K562 (cell line): ENCODE measurements at regions of chr5 and their contacts with region 1.

Region 1: GRCh38 chr5:66987949-66988838 is 208.4 kb downstream of the CD180 start:
- DNase-seq: peak; percentile 30 to 55 (median 42)
- ATAC-seq: peak; percentile 82
- H3K4me3 ChIP-seq: no peak overlapping the region
- H3K27ac ChIP-seq: no peak overlapping the region
- H3K4me1 ChIP-seq: no peaks in the 10 kb centered on the region
- H3K27me3 ChIP-seq: peaks cover 0 to 9% of the 10 kb centered on the region in 2 experiments; a peak in 2 of 5 replicates
- CTCF ChIP-seq: peak; percentile 48 to 77 (median 71); a peak in 5 of 6 replicates
- EP300 ChIP-seq: no peak
- POLR2A ChIP-seq: no peak
- RAD21 ChIP-seq: peak; percentile 69 to 82

Region 2: DNA sequence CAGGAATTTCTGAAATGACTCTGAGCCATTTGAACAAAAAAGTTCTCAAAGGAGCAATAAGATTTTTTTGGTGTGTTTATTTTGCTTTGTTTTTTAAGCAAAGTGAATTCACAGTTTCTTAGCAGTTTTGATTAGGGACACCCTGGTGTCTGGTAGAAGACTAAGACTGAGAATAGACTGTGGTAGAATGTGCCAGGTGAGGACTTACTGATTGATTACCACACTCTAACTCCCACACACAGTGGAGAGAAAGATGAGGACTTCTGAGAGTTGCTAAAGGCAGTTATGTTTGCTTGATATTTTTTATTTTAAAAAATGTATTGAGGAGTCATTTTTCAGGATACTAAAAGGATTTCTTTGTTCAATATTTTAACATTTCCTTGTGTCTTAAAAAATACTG is 33.3 kb after region 1 on chr5:
- CTCF ChIA-PET with region 1: no interaction called
- POLR2A ChIA-PET with region 1: no interaction called
- in situ Hi-C with region 1: no loop called
- intact Hi-C with region 1: no loop called
- DNase-seq: no peak
- ATAC-seq: peak; percentile 58; the same call in 2 of the 3 replicates
- H3K4me3 ChIP-seq: no peak overlapping the region
- H3K27ac ChIP-seq: no peak overlapping the region
- H3K4me1 ChIP-seq: peaks cover 0 to 14% of the 10 kb centered on the region in 2 experiments; a peak in 3 of 5 replicates
- H3K27me3 ChIP-seq: no peaks in the 10 kb centered on the region
- CTCF ChIP-seq: no peak
- EP300 ChIP-seq: no peak
- POLR2A ChIP-seq: no peak
- RAD21 ChIP-seq: no peak

Region 3: GRCh38 chr5:67149951-67150523 is 161.8 kb after region 1 on chr5:
- CTCF ChIA-PET with region 1: interaction called, 5 read pairs
- POLR2A ChIA-PET with region 1: no interaction called
- in situ Hi-C with region 1: loop called (anchors 10 kb)
- intact Hi-C with region 1: loop called (anchors 1 kb)
- DNase-seq: peak in 1 of 4 experiments; percentile 9
- ATAC-seq: peak; percentile 62; the same call in 1 of the 3 replicates
- H3K4me3 ChIP-seq: no peak overlapping the region
- H3K27ac ChIP-seq: no peak overlapping the region
- H3K4me1 ChIP-seq: peaks cover 0 to 6% of the 10 kb centered on the region in 2 experiments; a peak in 2 of 5 replicates
- H3K27me3 ChIP-seq: no peaks in the 10 kb centered on the region
- CTCF ChIP-seq: peak; percentile 6 to 65 (median 34); a peak in 3 of 6 replicates
- EP300 ChIP-seq: no peak
- POLR2A ChIP-seq: no peak
- RAD21 ChIP-seq: peak; percentile 43 to 64; a peak in 3 of 4 replicates

Region 4: GRCh38 chr5:67209142-67209771 is 221.1 kb after region 1 on chr5:
- CTCF ChIA-PET with region 1: interaction called, 4 read pairs
- POLR2A ChIA-PET with region 1: no interaction called
- in situ Hi-C with region 1: loop called (anchors 10 kb)
- intact Hi-C with region 1: loop called (anchors 5 kb)
- DNase-seq: peak; percentile 60 to 76 (median 68)
- ATAC-seq: peak; percentile 88
- H3K4me3 ChIP-seq: no peak overlapping the region
- H3K27ac ChIP-seq: no peak overlapping the region
- H3K4me1 ChIP-seq: no peaks in the 10 kb centered on the region
- H3K27me3 ChIP-seq: peaks cover 8 to 25% of the 10 kb centered on the region in 2 experiments
- CTCF ChIP-seq: peak; percentile 71 to 85 (median 75)
- EP300 ChIP-seq: no peak
- POLR2A ChIP-seq: no peak
- RAD21 ChIP-seq: peak; percentile 78 to 89

Region 5: DNA sequence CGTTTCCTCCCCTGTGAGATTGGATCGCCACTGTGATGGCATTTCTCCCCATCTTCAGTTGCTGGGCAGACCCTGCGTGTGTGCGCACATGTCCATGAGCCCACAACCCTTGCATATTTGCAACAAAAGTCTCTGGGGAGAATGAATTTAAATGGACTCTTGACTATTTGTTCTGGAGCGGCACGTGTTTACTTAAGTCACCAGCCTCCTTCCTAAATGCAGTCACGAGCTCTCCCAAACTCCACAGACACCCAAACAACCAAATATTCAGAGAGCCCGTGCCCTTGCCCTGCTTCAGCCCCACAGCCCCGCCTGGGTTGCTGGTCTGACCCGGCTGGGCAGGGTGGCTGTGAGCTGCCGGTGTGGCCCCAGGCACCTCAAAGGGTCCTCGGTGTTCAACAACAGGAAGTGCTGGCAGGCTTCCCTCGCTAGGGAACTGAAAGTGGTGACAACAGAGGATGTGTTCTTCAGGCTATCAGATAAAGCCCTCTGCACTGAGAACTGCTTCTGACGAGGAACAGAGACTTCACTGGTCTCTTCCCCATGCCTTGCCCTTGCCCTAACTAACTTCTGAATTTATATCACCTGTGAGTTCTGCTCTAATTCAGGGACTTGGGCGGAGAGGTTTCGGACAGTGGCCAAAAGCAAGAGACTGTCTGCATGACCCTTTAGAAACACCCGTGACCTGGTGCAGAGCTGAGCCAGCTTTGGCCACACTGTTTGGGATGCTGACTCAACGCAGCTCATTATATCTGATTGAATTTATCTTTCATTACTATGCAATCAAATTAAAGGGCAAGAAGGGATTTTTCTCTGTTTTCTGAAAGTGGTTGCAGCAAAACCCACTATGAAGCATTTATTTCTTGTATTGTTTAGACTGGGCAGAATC is 227.6 kb after region 1 on chr5:
- CTCF ChIA-PET with region 1: interaction called, 3 read pairs
- POLR2A ChIA-PET with region 1: interaction called, 3 read pairs
- in situ Hi-C with region 1: loop called (anchors 10 kb)
- intact Hi-C with region 1: no loop called
- DNase-seq: peak in 1 of 4 experiments; percentile 25
- ATAC-seq: peak; percentile 88
- H3K4me3 ChIP-seq: no peak overlapping the region
- H3K27ac ChIP-seq: no peak overlapping the region
- H3K4me1 ChIP-seq: peaks cover 0 to 6% of the 10 kb centered on the region in 2 experiments; a peak in 1 of 5 replicates
- H3K27me3 ChIP-seq: peaks cover 10 to 28% of the 10 kb centered on the region in 2 experiments
- CTCF ChIP-seq: no peak
- EP300 ChIP-seq: no peak
- POLR2A ChIP-seq: no peak
- RAD21 ChIP-seq: no peak